AG04450 (cell line): ENCODE measurements at regions of chr7 and their contacts with region 1.

Region 1: GRCh38 chr7:90771281-90771680 is 175.2 kb downstream of the CDK14 start:
- DNase-seq: no peak
- H3K4me3 ChIP-seq: no peak overlapping the region
- H3K27ac ChIP-seq: no peak overlapping the region
- H3K27me3 ChIP-seq: no peaks in the 10 kb centered on the region
- CTCF ChIP-seq: no peak

Region 2: GRCh38 chr7:91079492-91079891 is 308.2 kb after region 1 on chr7:
- CTCF ChIA-PET with region 1: no interaction called
- POLR2A ChIA-PET with region 1: interaction called, 20 read pairs
- DNase-seq: no peak
- H3K4me3 ChIP-seq: no peak overlapping the region
- H3K27ac ChIP-seq: no peak overlapping the region
- H3K27me3 ChIP-seq: no peaks in the 10 kb centered on the region
- CTCF ChIP-seq: no peak